Esophagus squamous epithelium (tissue), 5 donors: ENCODE measurements at regions of chr10 and their contacts with region 1.

Region 1: GRCh38 chr10:113126229-113127201 is 176.5 kb downstream of the TCF7L2 start:
- DNase-seq: no peak
- H3K4me3 ChIP-seq: peak overlapping the region; percentile 11 to 63 (median 28)
- H3K27ac ChIP-seq: no peak overlapping the region
- H3K4me1 ChIP-seq: peaks cover 0 to 20% (median 5%) of the 10 kb centered on the region in 3 donors
- H3K27me3 ChIP-seq: peaks cover 0 to 4% (median 0%) of the 10 kb centered on the region in 4 donors
- CTCF ChIP-seq: peak; percentile 47 to 93 (median 86)
- POLR2A ChIP-seq: no peak

Region 2: GRCh38 chr10:112565434-112566053 is 561.0 kb before region 1 on chr10:
- intact Hi-C with region 1: loop called (anchors 10 kb)
- DNase-seq: no peak
- H3K4me3 ChIP-seq: no peak overlapping the region
- H3K27ac ChIP-seq: no peak overlapping the region
- H3K4me1 ChIP-seq: no peaks in the 10 kb centered on the region
- H3K27me3 ChIP-seq: no peaks in the 10 kb centered on the region
- CTCF ChIP-seq: peak in 5 of 6 experiments; percentile 48 to 77 (median 65)
- POLR2A ChIP-seq: no peak

Region 3: GRCh38 chr10:112721080-112721698 is 405.3 kb before region 1 on chr10:
- intact Hi-C with region 1: loop called (anchors 10 kb)
- DNase-seq: no peak
- H3K4me3 ChIP-seq: no peak overlapping the region
- H3K27ac ChIP-seq: no peak overlapping the region
- H3K4me1 ChIP-seq: no peaks in the 10 kb centered on the region
- H3K27me3 ChIP-seq: no peaks in the 10 kb centered on the region
- CTCF ChIP-seq: peak in 5 of 6 experiments; percentile 57 to 71 (median 62)
- POLR2A ChIP-seq: no peak

Region 4: DNA sequence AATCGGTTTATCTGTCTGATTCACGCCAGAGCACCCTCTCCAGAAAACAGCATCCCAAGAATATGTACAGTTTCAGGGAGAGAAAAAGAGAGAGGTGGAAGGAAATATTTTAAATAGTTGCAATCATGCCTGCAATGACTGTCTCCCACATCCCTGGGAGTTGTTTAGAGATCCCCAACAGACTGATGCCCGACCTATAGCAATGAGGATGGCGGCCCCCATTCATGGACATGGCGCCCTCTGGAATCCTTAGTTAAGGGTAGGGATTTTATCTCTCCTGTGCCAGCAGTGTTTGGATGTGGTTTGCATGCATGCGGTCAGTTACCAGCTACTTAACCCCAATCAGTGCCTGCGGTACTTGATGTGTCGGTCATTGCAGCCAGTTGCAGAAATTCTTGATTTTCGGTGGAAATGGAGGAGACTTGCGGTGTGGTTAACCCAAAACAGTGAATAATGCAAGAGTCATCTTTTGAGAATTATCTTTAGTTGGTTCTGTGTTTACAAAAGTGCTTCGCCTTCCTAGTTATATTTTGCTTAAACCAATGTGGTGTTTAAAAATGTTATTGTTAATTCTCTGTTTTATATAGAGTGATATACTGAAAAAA is 362.5 kb before region 1 on chr10:
- intact Hi-C with region 1: no loop called
- DNase-seq: no peak
- H3K4me3 ChIP-seq: no peak overlapping the region
- H3K27ac ChIP-seq: no peak overlapping the region
- H3K4me1 ChIP-seq: peaks cover 0 to 5% (median 0%) of the 10 kb centered on the region in 3 donors
- H3K27me3 ChIP-seq: no peaks in the 10 kb centered on the region
- CTCF ChIP-seq: no peak
- POLR2A ChIP-seq: no peak

Region 5: GRCh38 chr10:112949875-112950507 is 176.5 kb before region 1 on chr10 and contains the start of gene TCF7L2:
- intact Hi-C with region 1: loop called (anchors 10 kb)
- DNase-seq: peak; percentile 79
- H3K4me3 ChIP-seq: peak within 1 kb of the TSS; percentile 73 to 87 (median 80)
- H3K27ac ChIP-seq: peak within 1 kb of the TSS; percentile 95 to 97 (median 97)
- H3K4me1 ChIP-seq: peaks cover 10 to 52% (median 19%) of the 10 kb centered on the region in 3 donors
- H3K27me3 ChIP-seq: peaks cover 0 to 7% (median 0%) of the 10 kb centered on the region in 4 donors
- CTCF ChIP-seq: no peak
- POLR2A ChIP-seq: peak in 2 of 4 donors; percentile 44 to 63
- total RNA-seq, gene TCF7L2: 4.0 to 13.2 (median 6.4) TPM